Naive thymus-derived CD4-positive, alpha-beta T cell (primary cell): ENCODE measurements at regions of chr9 and their contacts with region 1.

Region 1: GRCh38 chr9:125119643-125120286 is 23.6 kb downstream of the SCAI start:
- DNase-seq: peak in 7 of 9 donors; percentile 37 to 65 (median 50)
- ATAC-seq: peak; percentile 78
- H3K4me3 ChIP-seq: no peak overlapping the region
- H3K4me3 Mint-ChIP-seq: peak overlapping the region in 6 of 10 donors; percentile 35 to 59 (median 50)
- H3K27ac ChIP-seq: no peak overlapping the region
- H3K27ac Mint-ChIP-seq: peak overlapping the region; percentile 55 to 84 (median 75)
- H3K4me1 ChIP-seq: peaks cover 4 to 22% of the 10 kb centered on the region in 2 donors
- H3K4me1 Mint-ChIP-seq: peaks cover 19 to 58% (median 42%) of the 10 kb centered on the region in 7 donors
- H3K27me3 ChIP-seq: no peaks in the 10 kb centered on the region
- H3K27me3 Mint-ChIP-seq: no peaks in the 10 kb centered on the region

Region 2: GRCh38 chr9:125103770-125104460 is 15.8 kb before region 1 on chr9:
- CTCF ChIA-PET with region 1: no interaction called
- POLR2A ChIA-PET with region 1: no interaction called
- intact Hi-C with region 1: loop called in 1 of 2 experiments (anchors 2 kb)
- DNase-seq: no peak
- ATAC-seq: no peak
- H3K4me3 ChIP-seq: no peak overlapping the region
- H3K4me3 Mint-ChIP-seq: no peak overlapping the region
- H3K27ac ChIP-seq: no peak overlapping the region
- H3K27ac Mint-ChIP-seq: no peak overlapping the region
- H3K4me1 ChIP-seq: no peaks in the 10 kb centered on the region
- H3K4me1 Mint-ChIP-seq: peaks cover 0 to 53% (median 36%) of the 10 kb centered on the region in 7 donors
- H3K27me3 ChIP-seq: no peaks in the 10 kb centered on the region
- H3K27me3 Mint-ChIP-seq: no peaks in the 10 kb centered on the region